IMR-90 (cell line): ENCODE measurements at regions of chr12 and their contacts with region 1.

Region 1: DNA sequence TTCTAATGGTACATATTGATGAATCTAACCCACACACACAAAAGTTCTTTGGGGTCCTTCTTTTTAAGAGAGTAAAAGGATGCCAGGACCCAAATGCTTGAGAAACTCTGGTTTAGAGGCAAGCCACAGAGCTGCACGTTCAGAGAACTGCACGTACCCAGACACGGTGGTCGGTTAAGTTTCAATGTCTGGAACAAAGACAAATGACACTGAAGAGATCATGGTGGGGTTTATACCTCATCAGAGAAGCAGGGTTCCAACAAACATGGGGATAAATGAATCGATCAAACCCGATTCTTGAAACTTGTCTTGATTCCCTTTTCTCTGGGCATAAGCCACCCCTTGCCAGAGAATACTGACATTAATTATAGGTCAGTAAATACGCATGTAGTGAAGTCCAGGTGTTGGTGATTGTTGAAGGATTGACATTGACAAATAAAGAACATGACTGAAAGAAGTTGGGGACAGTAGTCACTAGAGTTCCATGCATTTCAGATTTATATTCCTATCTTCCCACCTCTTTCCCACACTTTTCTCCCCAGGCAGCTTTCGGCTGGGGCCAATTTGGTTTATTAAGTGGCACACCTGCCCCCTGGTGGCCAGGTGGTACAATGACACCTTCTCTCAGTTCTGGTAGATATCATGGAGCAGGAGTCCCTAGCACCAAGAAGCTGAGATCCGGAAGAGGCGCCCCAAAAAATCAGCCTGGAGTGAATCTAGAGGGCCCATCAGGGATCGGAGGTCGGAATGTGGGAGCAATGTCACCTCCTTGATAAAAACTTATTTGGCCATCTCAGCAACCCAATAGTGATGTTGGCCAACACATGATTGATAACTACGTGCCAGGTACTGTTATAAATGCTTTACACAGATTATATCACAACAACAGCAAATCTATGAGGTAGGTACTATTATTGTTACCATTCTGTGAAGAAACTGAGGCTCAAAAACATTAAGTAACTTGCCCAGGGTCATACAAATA is 17.8 kb upstream of the HDAC7 start:
- DNase-seq: peak; percentile 68
- ATAC-seq: peak; percentile 49
- H3K4me3 ChIP-seq: no peak overlapping the region
- H3K27ac ChIP-seq: no peak overlapping the region
- H3K4me1 ChIP-seq: peaks cover 14% of the 10 kb centered on the region
- H3K27me3 ChIP-seq: no peaks in the 10 kb centered on the region
- CTCF ChIP-seq: peak; percentile 81
- POLR2A ChIP-seq: no peak
- RAD21 ChIP-seq: peak; percentile 81

Region 2: DNA sequence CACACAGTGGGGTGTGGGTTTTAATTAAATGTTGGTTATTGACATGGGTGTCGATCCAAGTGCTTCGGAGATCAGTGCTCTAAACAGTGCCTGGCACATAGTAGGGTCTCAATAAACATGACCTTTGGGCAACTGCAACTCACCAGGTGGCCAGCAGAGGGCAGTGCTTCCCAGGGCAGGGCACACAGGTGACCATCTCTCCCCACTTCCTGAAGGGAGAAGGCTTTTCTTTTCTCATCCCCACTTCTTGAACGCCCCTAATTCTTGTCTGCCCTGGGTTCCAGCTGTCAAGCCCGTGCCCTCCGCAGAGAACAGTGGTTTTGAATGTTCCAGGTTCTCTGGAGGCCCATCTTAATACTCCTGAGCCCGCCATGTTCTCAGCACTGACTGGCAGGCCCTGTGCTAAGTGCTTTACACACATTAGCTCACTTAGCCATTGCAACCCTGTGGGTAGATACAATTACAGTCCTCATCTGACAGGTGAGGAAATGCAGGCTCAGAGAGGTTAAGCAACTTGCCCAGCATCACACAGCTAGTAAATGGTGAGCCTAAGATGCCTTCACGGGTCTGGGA is 95.1 kb before region 1 on chr12:
- CTCF ChIA-PET with region 1: interaction called, 12 read pairs
- POLR2A ChIA-PET with region 1: no interaction called
- dilution Hi-C with region 1: no loop called
- in situ Hi-C with region 1: loop called (anchors 10 kb)
- intact Hi-C with region 1: loop called (anchors 1 kb)
- DNase-seq: no peak
- ATAC-seq: peak; percentile 36; the same call in 1 of the 2 replicates
- H3K4me3 ChIP-seq: no peak overlapping the region
- H3K27ac ChIP-seq: no peak overlapping the region
- H3K4me1 ChIP-seq: peaks cover 6% of the 10 kb centered on the region
- H3K27me3 ChIP-seq: peaks cover 28% of the 10 kb centered on the region
- CTCF ChIP-seq: peak; percentile 87
- POLR2A ChIP-seq: no peak
- RAD21 ChIP-seq: peak; percentile 84

Region 3: DNA sequence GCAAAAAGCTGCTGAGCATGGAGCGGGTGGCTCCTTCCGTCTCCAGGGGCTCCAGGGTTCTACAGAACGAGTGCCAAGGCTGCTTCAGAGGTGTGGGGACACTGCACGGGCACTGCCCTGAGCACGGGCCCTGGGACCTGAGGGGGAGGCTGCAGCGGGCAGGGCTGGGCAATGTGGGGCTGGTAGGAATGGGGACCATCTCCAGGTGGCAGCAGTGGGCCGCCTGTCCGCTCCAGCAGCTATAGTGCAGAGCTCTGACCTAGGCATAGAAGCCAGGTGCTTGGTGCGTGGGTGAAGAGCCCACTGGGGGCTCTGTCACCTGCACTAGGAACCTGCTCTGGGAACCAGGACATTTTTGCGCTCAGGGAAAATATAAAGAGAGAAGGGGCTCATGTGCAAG is 40.0 kb before region 1 on chr12:
- CTCF ChIA-PET with region 1: interaction called, 4 read pairs
- POLR2A ChIA-PET with region 1: no interaction called
- dilution Hi-C with region 1: no loop called
- in situ Hi-C with region 1: no loop called
- intact Hi-C with region 1: loop called (anchors 1 kb)
- DNase-seq: no peak
- ATAC-seq: peak; percentile 48; the same call in 1 of the 2 replicates
- H3K4me3 ChIP-seq: no peak overlapping the region
- H3K27ac ChIP-seq: no peak overlapping the region
- H3K4me1 ChIP-seq: peaks cover 14% of the 10 kb centered on the region; the same call in 1 of the 2 replicates
- H3K27me3 ChIP-seq: no peaks in the 10 kb centered on the region
- CTCF ChIP-seq: peak; percentile 34
- POLR2A ChIP-seq: no peak
- RAD21 ChIP-seq: peak; percentile 55

Region 4: DNA sequence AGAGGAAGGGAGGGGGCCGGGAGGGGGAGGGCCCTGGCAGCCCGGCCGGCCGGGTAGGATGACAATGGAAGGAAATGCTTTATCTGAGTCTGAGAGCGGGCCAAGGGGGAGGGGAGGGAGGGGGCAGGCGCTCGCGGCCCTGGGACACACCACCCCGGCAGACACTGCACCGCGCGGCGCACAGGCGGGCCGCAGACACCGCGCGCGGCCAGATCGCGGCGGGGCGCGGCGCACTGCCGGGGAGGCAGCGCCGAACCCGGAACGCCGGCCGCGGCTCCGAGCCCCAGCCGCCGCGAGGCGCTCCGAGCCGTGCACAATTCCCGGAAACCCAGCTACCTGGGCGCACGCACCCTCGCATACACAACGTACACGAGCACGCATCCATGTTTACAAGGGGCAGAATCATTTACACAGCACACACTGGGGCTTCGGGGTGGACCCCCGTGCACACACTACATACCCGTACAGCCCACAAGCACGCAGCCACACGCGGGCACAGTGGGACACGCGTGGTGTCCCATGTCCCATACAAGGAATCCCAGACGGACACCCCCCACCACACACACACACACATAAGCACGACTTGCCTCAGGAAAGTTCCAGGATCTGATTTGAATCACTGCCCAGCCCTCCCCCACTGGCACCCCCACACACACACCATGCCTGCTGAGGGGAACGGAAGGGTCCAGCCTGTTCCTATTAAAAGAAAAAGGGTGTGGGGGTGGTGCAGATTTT is 17.4 kb before region 1 on chr12 and contains the start of gene HDAC7:
- CTCF ChIA-PET with region 1: interaction called, 5 read pairs
- POLR2A ChIA-PET with region 1: no interaction called
- dilution Hi-C with region 1: no loop called
- in situ Hi-C with region 1: no loop called
- intact Hi-C with region 1: loop called (anchors 2 kb)
- DNase-seq: peak; percentile 72
- ATAC-seq: peak; percentile 53
- H3K4me3 ChIP-seq: peak within 1 kb of the TSS; percentile 91
- H3K27ac ChIP-seq: peak within 1 kb of the TSS; percentile 99
- H3K4me1 ChIP-seq: peaks cover 37% of the 10 kb centered on the region
- H3K27me3 ChIP-seq: no peaks in the 10 kb centered on the region
- CTCF ChIP-seq: no peak
- POLR2A ChIP-seq: no peak; the same call in 1 of the 2 replicates
- RAD21 ChIP-seq: peak; percentile 8; the same call in 1 of the 2 replicates
- total RNA-seq, gene HDAC7: 10.4 and 10.6 TPM in 2 replicates

Region 5: GRCh38 chr12:47900131-47901062 is 62.9 kb after region 1 on chr12:
- CTCF ChIA-PET with region 1: no interaction called
- POLR2A ChIA-PET with region 1: no interaction called
- dilution Hi-C with region 1: no loop called
- in situ Hi-C with region 1: no loop called
- intact Hi-C with region 1: no loop called
- DNase-seq: no peak
- ATAC-seq: no peak
- H3K4me3 ChIP-seq: no peak overlapping the region
- H3K27ac ChIP-seq: no peak overlapping the region
- H3K4me1 ChIP-seq: peaks cover 16% of the 10 kb centered on the region
- H3K27me3 ChIP-seq: peaks cover 5% of the 10 kb centered on the region
- CTCF ChIP-seq: 0 out of 2 replicates have a peak, but pooled peaks have one; percentile 9
- POLR2A ChIP-seq: no peak
- RAD21 ChIP-seq: no peak

Region 6: GRCh38 chr12:48142818-48143674 is 305.6 kb after region 1 on chr12:
- CTCF ChIA-PET with region 1: no interaction called
- POLR2A ChIA-PET with region 1: no interaction called
- dilution Hi-C with region 1: no loop called
- in situ Hi-C with region 1: no loop called
- intact Hi-C with region 1: no loop called
- DNase-seq: no peak
- ATAC-seq: peak; percentile 35
- H3K4me3 ChIP-seq: no peak overlapping the region
- H3K27ac ChIP-seq: no peak overlapping the region
- H3K4me1 ChIP-seq: no peaks in the 10 kb centered on the region; the same call in 1 of the 2 replicates
- H3K27me3 ChIP-seq: no peaks in the 10 kb centered on the region
- CTCF ChIP-seq: no peak
- POLR2A ChIP-seq: no peak
- RAD21 ChIP-seq: no peak